A673 (cell line): ENCODE measurements at regions of chrX and their contacts with region 1.

Region 1: GRCh38 chrX:100674705-100675104 is 30.7 kb downstream of the SRPX2 start:
- DNase-seq: no peak
- H3K4me3 ChIP-seq: no peak overlapping the region
- H3K27ac ChIP-seq: no peak overlapping the region
- H3K4me1 ChIP-seq: no peaks in the 10 kb centered on the region
- H3K27me3 ChIP-seq: no peaks in the 10 kb centered on the region
- CTCF ChIP-seq: no peak

Region 2: GRCh38 chrX:100447654-100448397 is 226.9 kb before region 1 on chrX:
- CTCF ChIA-PET with region 1: interaction called, 11 read pairs
- POLR2A ChIA-PET with region 1: no interaction called
- intact Hi-C with region 1: no loop called
- DNase-seq: peak; percentile 39
- H3K4me3 ChIP-seq: no peak overlapping the region
- H3K27ac ChIP-seq: no peak overlapping the region
- H3K4me1 ChIP-seq: no peaks in the 10 kb centered on the region
- H3K27me3 ChIP-seq: peaks cover 7% of the 10 kb centered on the region
- CTCF ChIP-seq: peak; percentile 76

Region 3: GRCh38 chrX:100768679-100769338 is 94.1 kb after region 1 on chrX:
- CTCF ChIA-PET with region 1: interaction called, 31 read pairs
- POLR2A ChIA-PET with region 1: no interaction called
- intact Hi-C with region 1: no loop called
- DNase-seq: peak; percentile 84
- H3K4me3 ChIP-seq: no peak overlapping the region
- H3K27ac ChIP-seq: no peak overlapping the region
- H3K4me1 ChIP-seq: no peaks in the 10 kb centered on the region
- H3K27me3 ChIP-seq: peaks cover 26% of the 10 kb centered on the region
- CTCF ChIP-seq: peak; percentile 100

Region 4: GRCh38 chrX:101287402-101287801 is 612.7 kb after region 1 on chrX:
- CTCF ChIA-PET with region 1: no interaction called
- POLR2A ChIA-PET with region 1: no interaction called
- intact Hi-C with region 1: loop called (anchors 5 kb)
- DNase-seq: peak; percentile 58
- H3K4me3 ChIP-seq: no peak overlapping the region
- H3K27ac ChIP-seq: no peak overlapping the region
- H3K4me1 ChIP-seq: no peaks in the 10 kb centered on the region
- H3K27me3 ChIP-seq: no peaks in the 10 kb centered on the region
- CTCF ChIP-seq: peak; percentile 68

Region 5: GRCh38 chrX:102008901-102009300 is 1334.2 kb after region 1 on chrX:
- CTCF ChIA-PET with region 1: interaction called, 10 read pairs
- POLR2A ChIA-PET with region 1: no interaction called
- intact Hi-C with region 1: no loop called
- DNase-seq: no peak
- H3K4me3 ChIP-seq: no peak overlapping the region
- H3K27ac ChIP-seq: no peak overlapping the region
- H3K4me1 ChIP-seq: no peaks in the 10 kb centered on the region
- H3K27me3 ChIP-seq: no peaks in the 10 kb centered on the region
- CTCF ChIP-seq: no peak